Mammary epithelial cell (primary cell): ENCODE measurements at regions of chr3 and their contacts with region 1.

Region 1: GRCh38 chr3:43180027-43180426 is 74.1 kb upstream of the POMGNT2 start:
- DNase-seq: peak; percentile 89
- H3K4me3 ChIP-seq: no peak overlapping the region
- H3K27ac ChIP-seq: peak overlapping the region; percentile 48
- H3K4me1 ChIP-seq: peaks cover 33% of the 10 kb centered on the region
- H3K27me3 ChIP-seq: peaks cover 2% of the 10 kb centered on the region
- CTCF ChIP-seq: no peak

Region 2: GRCh38 chr3:43259626-43260025 is 79.6 kb after region 1 on chr3:
- CTCF ChIA-PET with region 1: no interaction called
- dilution Hi-C with region 1: no loop called
- in situ Hi-C with region 1: no loop called
- intact Hi-C with region 1: loop called (anchors 2 kb)
- DNase-seq: peak; percentile 99
- H3K4me3 ChIP-seq: no peak overlapping the region
- H3K27ac ChIP-seq: peak overlapping the region; percentile 63
- H3K4me1 ChIP-seq: peaks cover 15% of the 10 kb centered on the region
- H3K27me3 ChIP-seq: no peaks in the 10 kb centered on the region
- CTCF ChIP-seq: no peak